Left cardiac atrium (tissue), 4 donors: ENCODE measurements at regions of chr17 and their contacts with region 1.

Region 1: DNA sequence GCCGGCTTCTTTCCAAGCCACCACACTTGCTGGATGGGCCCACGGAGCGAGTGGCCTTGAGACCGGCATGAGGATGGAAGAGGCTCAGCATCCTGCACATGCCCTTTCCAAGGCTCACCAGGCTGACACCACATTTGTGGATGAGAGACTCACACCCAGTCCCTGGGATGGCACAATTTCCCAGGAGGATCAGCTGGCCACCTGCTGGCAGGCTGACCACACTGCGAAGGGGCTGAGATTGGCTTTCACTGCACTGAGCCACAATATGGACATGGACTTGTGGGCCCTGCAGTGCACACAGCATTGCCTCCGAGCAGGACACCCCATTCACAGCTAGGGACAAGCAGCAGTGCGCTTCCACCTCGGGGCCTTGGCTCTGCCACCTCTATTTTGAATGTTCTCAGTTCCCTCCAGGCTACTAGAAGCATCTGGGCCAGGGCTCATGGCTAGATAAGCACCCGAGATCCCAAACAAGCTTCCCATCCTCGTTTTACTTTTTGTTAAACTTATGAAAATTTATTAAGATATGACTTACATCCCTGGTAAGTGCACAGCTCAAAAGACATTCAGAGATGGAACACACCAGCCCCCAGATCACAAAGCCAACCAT is 25.3 kb upstream of the KSR1 start:
- DNase-seq: no peak
- ATAC-seq: peak; percentile 30 to 76

Region 2: GRCh38 chr17:27236717-27237315 is 194.2 kb before region 1 on chr17:
- intact Hi-C with region 1: loop called in 1 of 2 experiments (anchors 10 kb)
- DNase-seq: peak; percentile 76
- ATAC-seq: peak; percentile 54 to 62

Region 3: GRCh38 chr17:27353461-27354050 is 77.4 kb before region 1 on chr17:
- intact Hi-C with region 1: loop called in 1 of 2 experiments (anchors 10 kb)
- DNase-seq: peak; percentile 94
- ATAC-seq: peak; percentile 92 to 94

Region 4: GRCh38 chr17:27651411-27652345 is 220.7 kb after region 1 on chr17:
- intact Hi-C with region 1: no loop called
- DNase-seq: peak; percentile 67
- ATAC-seq: peak; percentile 48 to 62

Region 5: GRCh38 chr17:28306954-28307401 is 876.0 kb after region 1 on chr17:
- intact Hi-C with region 1: no loop called
- DNase-seq: no peak
- ATAC-seq: no peak